CD4-positive, alpha-beta T cell (primary cell): ENCODE measurements at regions of chr1 and their contacts with region 1.

Region 1: GRCh38 chr1:2412519-2413233 is at the start of gene PEX10:
- DNase-seq: peak; percentile 95 to 99 (median 98)
- ATAC-seq: peak; percentile 89
- H3K4me3 ChIP-seq: peak within 1 kb of the TSS; percentile 67
- H3K4me3 Mint-ChIP-seq: peak within 1 kb of the TSS; percentile 94
- H3K27ac ChIP-seq: peak within 1 kb of the TSS; percentile 69 to 72
- H3K27ac Mint-ChIP-seq: peak within 1 kb of the TSS; percentile 92
- H3K4me1 ChIP-seq: peaks cover 57% of the 10 kb centered on the region
- H3K4me1 Mint-ChIP-seq: peaks cover 32% of the 10 kb centered on the region
- H3K27me3 ChIP-seq: no peaks in the 10 kb centered on the region
- H3K27me3 Mint-ChIP-seq: no peaks in the 10 kb centered on the region
- CTCF ChIP-seq: no peak
- total RNA-seq, gene PEX10: 12.0 to 12.5 TPM

Region 2: GRCh38 chr1:2314803-2315673 is 97.6 kb before region 1 on chr1:
- CTCF ChIA-PET with region 1: no interaction called
- POLR2A ChIA-PET with region 1: no interaction called
- intact Hi-C with region 1: no loop called
- DNase-seq: peak; percentile 41 to 86 (median 66)
- ATAC-seq: peak; percentile 45
- H3K4me3 ChIP-seq: peak overlapping the region; percentile 56
- H3K4me3 Mint-ChIP-seq: peak overlapping the region; percentile 83
- H3K27ac ChIP-seq: peak overlapping the region; percentile 47 to 61
- H3K27ac Mint-ChIP-seq: peak overlapping the region; percentile 81
- H3K4me1 ChIP-seq: peaks cover 61% of the 10 kb centered on the region
- H3K4me1 Mint-ChIP-seq: peaks cover 19% of the 10 kb centered on the region
- H3K27me3 ChIP-seq: no peaks in the 10 kb centered on the region
- H3K27me3 Mint-ChIP-seq: no peaks in the 10 kb centered on the region
- CTCF ChIP-seq: peak; percentile 96

Region 3: GRCh38 chr1:2545759-2546514 is 133.3 kb after region 1 on chr1:
- CTCF ChIA-PET with region 1: interaction called, 6 read pairs
- POLR2A ChIA-PET with region 1: interaction called, 54 read pairs
- intact Hi-C with region 1: loop called (anchors 1 kb)
- DNase-seq: peak; percentile 82 to 97 (median 88)
- ATAC-seq: peak; percentile 45
- H3K4me3 ChIP-seq: peak overlapping the region; percentile 81
- H3K4me3 Mint-ChIP-seq: peak overlapping the region; percentile 95
- H3K27ac ChIP-seq: peak overlapping the region; percentile 96 to 99
- H3K27ac Mint-ChIP-seq: peak overlapping the region; percentile 99
- H3K4me1 ChIP-seq: peaks cover 70% of the 10 kb centered on the region
- H3K4me1 Mint-ChIP-seq: peaks cover 38% of the 10 kb centered on the region
- H3K27me3 ChIP-seq: peaks cover 0 to 2% of the 10 kb centered on the region in 2 experiments
- H3K27me3 Mint-ChIP-seq: no peaks in the 10 kb centered on the region
- CTCF ChIP-seq: no peak

Region 4: DNA sequence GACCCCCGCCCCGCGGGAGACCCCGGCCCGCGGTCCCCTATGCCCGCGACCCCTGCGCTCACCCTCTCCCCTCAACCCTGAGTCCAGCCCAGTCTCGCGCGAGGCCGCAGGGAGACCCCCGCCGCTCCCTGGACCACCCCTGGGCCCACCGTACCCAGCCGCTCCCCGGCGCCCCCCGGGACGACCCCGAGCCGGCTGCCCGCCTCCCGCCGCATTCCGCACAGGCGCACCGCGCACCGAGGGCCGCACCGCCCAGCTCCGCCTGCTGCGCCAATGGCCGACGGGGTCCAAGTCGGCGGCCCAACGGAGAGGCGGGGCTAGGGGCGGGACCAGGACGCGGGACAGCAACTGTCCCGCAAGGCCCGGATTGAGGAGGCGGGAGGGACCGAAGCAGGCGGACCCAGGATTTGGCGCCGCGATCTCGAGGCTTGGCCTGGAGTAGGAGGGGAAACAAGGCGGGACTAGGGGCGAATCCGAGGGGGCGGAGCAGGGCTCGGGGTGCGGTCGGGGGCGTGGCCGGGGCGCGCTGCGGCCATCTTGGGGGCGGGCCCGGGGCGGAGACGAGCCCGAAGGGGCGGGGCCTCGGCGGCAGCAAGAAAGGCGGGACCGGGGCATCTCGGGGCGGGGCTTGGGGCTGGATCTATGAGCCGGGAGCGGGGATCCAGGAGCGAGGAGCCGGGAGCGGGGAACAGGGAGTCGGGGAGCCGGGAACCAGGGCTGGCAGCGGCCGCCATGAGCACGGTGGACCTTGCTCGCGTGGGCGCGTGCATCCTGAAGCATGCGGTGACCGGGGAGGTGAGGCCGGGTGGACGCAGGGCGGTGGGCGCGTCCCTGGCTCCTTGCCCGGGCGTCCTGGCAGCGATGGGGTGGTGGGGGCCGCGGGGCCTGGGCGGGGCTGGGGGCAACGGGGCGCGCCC is 173.7 kb after region 1 on chr1 and contains the start of gene PRXL2B:
- CTCF ChIA-PET with region 1: interaction called, 4 read pairs
- POLR2A ChIA-PET with region 1: interaction called, 8 read pairs
- intact Hi-C with region 1: loop called in 1 of 2 experiments (anchors 1 kb)
- DNase-seq: peak; percentile 92 to 99 (median 97)
- ATAC-seq: peak; percentile 61
- H3K4me3 ChIP-seq: peak within 1 kb of the TSS; percentile 85
- H3K4me3 Mint-ChIP-seq: peak within 1 kb of the TSS; percentile 99
- H3K27ac ChIP-seq: peak within 1 kb of the TSS; percentile 97 to 99
- H3K27ac Mint-ChIP-seq: peak within 1 kb of the TSS; percentile 98
- H3K4me1 ChIP-seq: peaks cover 62% of the 10 kb centered on the region
- H3K4me1 Mint-ChIP-seq: peaks cover 38% of the 10 kb centered on the region
- H3K27me3 ChIP-seq: no peaks in the 10 kb centered on the region
- H3K27me3 Mint-ChIP-seq: no peaks in the 10 kb centered on the region
- CTCF ChIP-seq: no peak
- total RNA-seq, gene PRXL2B: 11.0 to 12.8 TPM

Region 5: DNA sequence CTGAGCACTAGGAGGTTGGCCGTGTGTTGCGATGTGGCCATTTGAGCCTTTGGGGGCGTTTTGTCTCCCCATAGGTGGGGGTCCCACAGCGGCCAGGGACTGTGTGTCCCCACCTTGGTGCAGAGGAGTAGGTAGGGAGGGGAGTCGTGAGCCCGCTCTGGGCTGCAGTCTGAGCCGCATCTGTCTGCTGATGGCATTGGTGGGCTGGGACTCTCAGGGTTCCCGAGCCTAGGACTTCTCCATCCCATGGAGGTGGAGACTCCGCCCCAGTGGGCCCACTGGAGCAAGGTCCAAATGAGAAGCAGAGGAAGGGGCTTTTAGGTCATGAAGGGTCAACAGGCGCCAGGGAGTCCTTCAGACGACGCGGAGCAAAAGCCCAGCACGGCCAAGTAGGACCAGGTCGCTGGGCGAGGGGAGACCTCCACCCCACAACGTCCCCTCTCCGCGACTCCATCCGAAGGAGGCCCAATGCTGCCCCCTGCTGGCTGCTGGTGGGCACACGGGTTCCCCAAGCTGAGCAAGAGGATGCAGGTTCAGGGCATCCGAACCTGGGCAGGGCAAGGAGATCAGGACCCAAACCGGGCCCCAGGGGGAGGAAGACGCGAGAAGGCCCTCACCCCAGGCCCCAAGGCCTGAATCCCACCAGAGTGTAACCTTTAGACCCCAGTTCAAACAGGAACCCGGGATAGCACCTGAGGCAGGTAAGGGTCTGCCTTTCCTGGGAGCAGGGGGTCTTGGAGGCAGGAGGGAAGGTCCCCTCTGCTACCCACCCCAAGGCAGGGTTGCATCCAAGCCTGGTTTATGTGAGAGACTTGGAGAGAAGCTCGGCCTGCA is 373.9 kb after region 1 on chr1:
- CTCF ChIA-PET with region 1: interaction called, 7 read pairs
- POLR2A ChIA-PET with region 1: interaction called, 4 read pairs
- intact Hi-C with region 1: loop called in 1 of 2 experiments (anchors 1 kb)
- DNase-seq: peak; percentile 59 to 83 (median 73)
- ATAC-seq: peak; percentile 76
- H3K4me3 ChIP-seq: no peak overlapping the region
- H3K4me3 Mint-ChIP-seq: no peak overlapping the region
- H3K27ac ChIP-seq: no peak overlapping the region
- H3K27ac Mint-ChIP-seq: no peak overlapping the region
- H3K4me1 ChIP-seq: peaks cover 19% of the 10 kb centered on the region
- H3K4me1 Mint-ChIP-seq: peaks cover 11% of the 10 kb centered on the region
- H3K27me3 ChIP-seq: peaks cover 33 to 40% of the 10 kb centered on the region in 2 experiments
- H3K27me3 Mint-ChIP-seq: peaks cover 41% of the 10 kb centered on the region
- CTCF ChIP-seq: peak; percentile 76

Region 6: GRCh38 chr1:3423245-3423829 is 1010.7 kb after region 1 on chr1:
- CTCF ChIA-PET with region 1: no interaction called
- POLR2A ChIA-PET with region 1: no interaction called
- intact Hi-C with region 1: loop called in 1 of 2 experiments (anchors 10 kb)
- DNase-seq: no peak
- ATAC-seq: no peak
- H3K4me3 ChIP-seq: no peak overlapping the region
- H3K4me3 Mint-ChIP-seq: no peak overlapping the region
- H3K27ac ChIP-seq: no peak overlapping the region
- H3K27ac Mint-ChIP-seq: no peak overlapping the region
- H3K4me1 ChIP-seq: peaks cover 6% of the 10 kb centered on the region
- H3K4me1 Mint-ChIP-seq: no peaks in the 10 kb centered on the region
- H3K27me3 ChIP-seq: peaks cover 0 to 2% of the 10 kb centered on the region in 2 experiments
- H3K27me3 Mint-ChIP-seq: peaks cover 5% of the 10 kb centered on the region
- CTCF ChIP-seq: no peak